CD4-positive, alpha-beta T cell (primary cell): ENCODE measurements at regions of chr10 and their contacts with region 1.

Region 1: GRCh38 chr10:89086801-89087521 is 96.4 kb downstream of the FAS start:
- DNase-seq: peak in 3 of 14 experiments; percentile 13 to 57 (median 36)
- ATAC-seq: no peak
- H3K4me3 ChIP-seq: no peak overlapping the region
- H3K4me3 Mint-ChIP-seq: peak overlapping the region; percentile 23
- H3K27ac ChIP-seq: no peak overlapping the region
- H3K27ac Mint-ChIP-seq: no peak overlapping the region
- H3K4me1 ChIP-seq: peaks cover 13% of the 10 kb centered on the region
- H3K4me1 Mint-ChIP-seq: no peaks in the 10 kb centered on the region
- H3K27me3 ChIP-seq: no peaks in the 10 kb centered on the region
- H3K27me3 Mint-ChIP-seq: no peaks in the 10 kb centered on the region
- CTCF ChIP-seq: no peak

Region 2: DNA sequence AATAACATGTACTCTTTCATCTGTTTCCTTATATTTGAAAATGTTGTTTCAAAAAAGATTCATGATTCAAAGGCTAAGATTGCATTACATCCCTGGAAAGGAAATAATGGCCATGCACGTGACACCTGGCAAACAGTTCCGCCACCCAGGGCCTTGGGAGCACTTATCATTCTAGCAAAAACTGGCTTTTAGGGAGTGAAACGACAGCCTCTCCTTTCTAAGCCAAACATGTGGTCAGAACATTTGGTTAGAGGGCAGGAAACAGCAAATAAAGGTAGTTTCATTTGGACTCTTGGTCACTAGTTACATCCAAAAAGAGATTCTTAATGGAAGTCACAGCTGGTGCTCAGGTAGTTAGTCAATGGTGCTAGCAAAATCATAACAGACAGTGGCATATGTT is 12.8 kb before region 1 on chr10:
- CTCF ChIA-PET with region 1: no interaction called
- POLR2A ChIA-PET with region 1: interaction called, 3 read pairs
- intact Hi-C with region 1: loop called in 1 of 2 experiments (anchors 1 kb)
- DNase-seq: no peak
- ATAC-seq: no peak
- H3K4me3 ChIP-seq: no peak overlapping the region
- H3K4me3 Mint-ChIP-seq: no peak overlapping the region
- H3K27ac ChIP-seq: no peak overlapping the region
- H3K27ac Mint-ChIP-seq: no peak overlapping the region
- H3K4me1 ChIP-seq: no peaks in the 10 kb centered on the region
- H3K4me1 Mint-ChIP-seq: no peaks in the 10 kb centered on the region
- H3K27me3 ChIP-seq: no peaks in the 10 kb centered on the region
- H3K27me3 Mint-ChIP-seq: peaks cover 7% of the 10 kb centered on the region
- CTCF ChIP-seq: no peak